B cell (primary cell): ENCODE measurements at regions of chr12 and their contacts with region 1.

Region 1: GRCh38 chr12:48851883-48852733 is at the start of gene DDX23:
- DNase-seq: peak; percentile 95
- ATAC-seq: peak; percentile 97
- H3K4me3 ChIP-seq: peak within 1 kb of the TSS; percentile 76 to 97 (median 93)
- H3K4me3 Mint-ChIP-seq: peak within 1 kb of the TSS; percentile 97
- H3K27ac ChIP-seq: peak within 1 kb of the TSS; percentile 87 to 90
- H3K27ac Mint-ChIP-seq: peak within 1 kb of the TSS; percentile 98
- H3K4me1 ChIP-seq: peaks cover 14 to 25% of the 10 kb centered on the region in 2 donors
- H3K4me1 Mint-ChIP-seq: peaks cover 36% of the 10 kb centered on the region
- H3K27me3 ChIP-seq: no peaks in the 10 kb centered on the region
- H3K27me3 Mint-ChIP-seq: no peaks in the 10 kb centered on the region
- CTCF ChIP-seq: no peak
- total RNA-seq, gene DDX23: 135 and 156 TPM in 2 replicates

Region 2: DNA sequence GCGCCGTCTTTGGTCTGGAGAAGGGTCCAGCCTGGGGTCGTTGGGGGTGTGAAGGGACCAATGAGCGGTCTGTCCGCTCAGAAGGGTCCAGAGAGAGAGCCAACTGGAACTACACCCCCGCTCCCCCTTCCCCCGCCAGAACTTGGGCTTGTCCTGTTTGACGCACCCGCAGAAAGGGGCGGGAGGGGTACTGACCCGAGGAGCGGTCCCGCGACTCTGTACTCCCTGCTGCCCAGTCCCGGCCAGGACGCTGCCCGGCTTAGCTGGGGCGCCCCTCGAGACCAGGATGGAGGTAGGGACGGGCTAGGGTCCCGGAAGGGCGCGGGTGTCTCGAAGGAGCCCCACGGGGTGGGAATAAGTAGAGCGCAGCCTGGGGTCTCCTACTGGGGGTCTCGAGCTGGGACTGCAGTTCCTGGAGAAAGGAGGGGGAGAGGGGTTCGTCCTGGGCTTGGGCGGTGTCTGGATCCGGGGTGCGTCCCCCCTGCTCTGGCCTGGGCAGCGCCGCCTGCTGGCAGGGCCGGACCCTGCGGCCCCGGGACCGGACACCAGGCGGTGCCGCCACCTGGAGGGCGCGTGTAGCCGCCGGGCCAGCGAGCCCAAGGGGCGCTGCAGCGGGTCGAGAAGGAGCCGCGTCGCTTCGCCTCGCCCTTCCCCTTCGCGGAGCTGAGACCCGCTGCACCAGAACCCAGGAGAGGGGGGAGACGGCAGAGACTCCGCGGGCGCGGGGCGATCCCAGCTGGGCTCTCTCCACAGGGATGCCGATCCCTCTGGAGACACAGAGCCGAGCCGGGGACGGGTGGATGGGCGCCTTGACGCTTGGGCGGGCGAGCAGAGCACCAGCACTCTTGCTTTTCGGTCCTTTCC is 37.6 kb before region 1 on chr12:
- CTCF ChIA-PET with region 1: interaction called, 24 read pairs
- POLR2A ChIA-PET with region 1: interaction called, 13 read pairs
- intact Hi-C with region 1: loop called (anchors 1 kb)
- DNase-seq: peak; percentile 87
- ATAC-seq: peak; percentile 81
- H3K4me3 ChIP-seq: peak overlapping the region; percentile 38 to 84 (median 69)
- H3K4me3 Mint-ChIP-seq: peak overlapping the region; percentile 96
- H3K27ac ChIP-seq: peak overlapping the region in 1 of 2 donors; percentile 32
- H3K27ac Mint-ChIP-seq: peak overlapping the region; percentile 53
- H3K4me1 ChIP-seq: peaks cover 30 to 38% of the 10 kb centered on the region in 2 donors
- H3K4me1 Mint-ChIP-seq: peaks cover 29% of the 10 kb centered on the region
- H3K27me3 ChIP-seq: peaks cover 0 to 31% (median 16%) of the 10 kb centered on the region in 4 experiments
- H3K27me3 Mint-ChIP-seq: peaks cover 12% of the 10 kb centered on the region
- CTCF ChIP-seq: peak; percentile 99

Region 3: GRCh38 chr12:48882315-48882687 is 30.2 kb after region 1 on chr12:
- CTCF ChIA-PET with region 1: interaction called, 303 read pairs
- POLR2A ChIA-PET with region 1: no interaction called
- intact Hi-C with region 1: no loop called
- DNase-seq: no peak
- ATAC-seq: no peak
- H3K4me3 ChIP-seq: no peak overlapping the region
- H3K4me3 Mint-ChIP-seq: no peak overlapping the region
- H3K27ac ChIP-seq: no peak overlapping the region
- H3K27ac Mint-ChIP-seq: no peak overlapping the region
- H3K4me1 ChIP-seq: no peaks in the 10 kb centered on the region
- H3K4me1 Mint-ChIP-seq: peaks cover 3% of the 10 kb centered on the region
- H3K27me3 ChIP-seq: peaks cover 0 to 33% (median 18%) of the 10 kb centered on the region in 4 experiments
- H3K27me3 Mint-ChIP-seq: peaks cover 34% of the 10 kb centered on the region
- CTCF ChIP-seq: no peak

Region 4: GRCh38 chr12:48924617-48925303 is 72.7 kb after region 1 on chr12:
- CTCF ChIA-PET with region 1: interaction called, 31 read pairs
- POLR2A ChIA-PET with region 1: interaction called, 3 read pairs
- intact Hi-C with region 1: loop called (anchors 2 kb)
- DNase-seq: peak; percentile 88
- ATAC-seq: peak; percentile 82
- H3K4me3 ChIP-seq: peak overlapping the region; percentile 70 to 100 (median 84)
- H3K4me3 Mint-ChIP-seq: peak overlapping the region; percentile 98
- H3K27ac ChIP-seq: peak overlapping the region; percentile 88 to 94
- H3K27ac Mint-ChIP-seq: peak overlapping the region; percentile 95
- H3K4me1 ChIP-seq: peaks cover 10 to 12% of the 10 kb centered on the region in 2 donors
- H3K4me1 Mint-ChIP-seq: peaks cover 14% of the 10 kb centered on the region
- H3K27me3 ChIP-seq: no peaks in the 10 kb centered on the region
- H3K27me3 Mint-ChIP-seq: no peaks in the 10 kb centered on the region
- CTCF ChIP-seq: peak; percentile 86

Region 5: DNA sequence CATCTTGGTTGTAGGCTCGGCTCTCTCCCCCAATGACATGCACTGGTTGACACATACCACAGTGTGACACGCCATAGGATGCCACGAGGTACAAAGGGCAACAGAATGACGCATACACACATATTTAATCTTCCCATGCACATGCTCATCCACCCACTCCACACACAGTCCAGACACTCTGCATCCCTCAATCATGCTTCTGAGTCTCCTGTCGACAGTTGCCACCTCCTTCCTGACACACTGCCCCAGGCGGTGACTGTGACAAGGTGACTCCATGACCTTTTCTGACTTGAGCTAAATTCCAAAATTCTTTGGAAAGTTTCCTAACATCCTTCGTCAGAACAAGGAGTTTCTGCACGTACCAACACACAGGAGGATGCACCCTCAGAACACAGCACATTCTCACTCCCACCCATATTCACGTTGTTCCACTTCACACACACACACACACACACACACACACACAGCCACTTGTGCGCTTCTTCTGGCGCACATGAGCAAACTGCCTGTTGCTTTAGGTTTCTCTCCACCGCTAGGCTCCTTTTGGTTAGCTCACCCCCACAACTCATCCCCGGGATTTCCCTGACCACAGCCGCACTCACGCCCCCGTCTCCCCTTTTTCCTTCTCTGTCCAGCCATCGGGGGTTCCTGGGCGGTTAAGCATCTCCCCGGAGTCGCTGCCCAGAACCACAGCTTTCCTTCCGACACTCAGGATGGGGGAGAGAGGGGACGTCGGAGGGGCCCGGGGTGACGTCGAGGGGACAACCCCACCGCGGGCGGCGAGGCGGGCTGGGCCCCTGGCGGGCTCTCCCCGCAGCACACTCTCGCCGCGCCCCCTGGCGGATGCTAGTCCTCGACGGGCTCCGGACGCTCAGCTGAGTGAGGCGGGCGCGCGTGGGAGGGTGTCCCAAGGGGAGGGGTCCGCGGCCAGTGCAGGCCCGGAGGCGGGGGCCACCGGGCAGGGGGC is 125.5 kb after region 1 on chr12:
- CTCF ChIA-PET with region 1: interaction called, 38 read pairs
- POLR2A ChIA-PET with region 1: interaction called, 5 read pairs
- intact Hi-C with region 1: loop called (anchors 2 kb)
- DNase-seq: peak; percentile 90
- ATAC-seq: peak; percentile 69
- H3K4me3 ChIP-seq: peak overlapping the region in 3 of 5 experiments; percentile 60 to 86 (median 65)
- H3K4me3 Mint-ChIP-seq: peak overlapping the region; percentile 72
- H3K27ac ChIP-seq: no peak overlapping the region
- H3K27ac Mint-ChIP-seq: peak overlapping the region; percentile 73
- H3K4me1 ChIP-seq: peaks cover 55 to 56% of the 10 kb centered on the region in 2 donors
- H3K4me1 Mint-ChIP-seq: peaks cover 57% of the 10 kb centered on the region
- H3K27me3 ChIP-seq: peaks cover 2 to 90% (median 54%) of the 10 kb centered on the region in 4 experiments
- H3K27me3 Mint-ChIP-seq: peaks cover 74% of the 10 kb centered on the region
- CTCF ChIP-seq: peak; percentile 92

Region 6: GRCh38 chr12:49018261-49019119 is 166.4 kb after region 1 on chr12 and contains the start of gene PRKAG1:
- CTCF ChIA-PET with region 1: interaction called, 6 read pairs
- POLR2A ChIA-PET with region 1: no interaction called
- intact Hi-C with region 1: loop called (anchors 1 kb)
- DNase-seq: peak; percentile 98
- ATAC-seq: peak; percentile 88
- H3K4me3 ChIP-seq: peak within 1 kb of the TSS; percentile 79 to 88 (median 86)
- H3K4me3 Mint-ChIP-seq: peak within 1 kb of the TSS; percentile 91
- H3K27ac ChIP-seq: peak within 1 kb of the TSS; percentile 95 to 99
- H3K27ac Mint-ChIP-seq: peak within 1 kb of the TSS; percentile 98
- H3K4me1 ChIP-seq: peaks cover 18 to 21% of the 10 kb centered on the region in 2 donors
- H3K4me1 Mint-ChIP-seq: peaks cover 29% of the 10 kb centered on the region
- H3K27me3 ChIP-seq: no peaks in the 10 kb centered on the region
- H3K27me3 Mint-ChIP-seq: no peaks in the 10 kb centered on the region
- CTCF ChIP-seq: peak; percentile 74
- total RNA-seq, gene PRKAG1: 58.6 and 60.0 TPM in 2 replicates